Activated CD8-positive, alpha-beta T cell treated with anti-CD3 and anti-CD28 coated beads for 36 hours (primary cell): ENCODE measurements at regions of chr2 and their contacts with region 1.

Region 1: DNA sequence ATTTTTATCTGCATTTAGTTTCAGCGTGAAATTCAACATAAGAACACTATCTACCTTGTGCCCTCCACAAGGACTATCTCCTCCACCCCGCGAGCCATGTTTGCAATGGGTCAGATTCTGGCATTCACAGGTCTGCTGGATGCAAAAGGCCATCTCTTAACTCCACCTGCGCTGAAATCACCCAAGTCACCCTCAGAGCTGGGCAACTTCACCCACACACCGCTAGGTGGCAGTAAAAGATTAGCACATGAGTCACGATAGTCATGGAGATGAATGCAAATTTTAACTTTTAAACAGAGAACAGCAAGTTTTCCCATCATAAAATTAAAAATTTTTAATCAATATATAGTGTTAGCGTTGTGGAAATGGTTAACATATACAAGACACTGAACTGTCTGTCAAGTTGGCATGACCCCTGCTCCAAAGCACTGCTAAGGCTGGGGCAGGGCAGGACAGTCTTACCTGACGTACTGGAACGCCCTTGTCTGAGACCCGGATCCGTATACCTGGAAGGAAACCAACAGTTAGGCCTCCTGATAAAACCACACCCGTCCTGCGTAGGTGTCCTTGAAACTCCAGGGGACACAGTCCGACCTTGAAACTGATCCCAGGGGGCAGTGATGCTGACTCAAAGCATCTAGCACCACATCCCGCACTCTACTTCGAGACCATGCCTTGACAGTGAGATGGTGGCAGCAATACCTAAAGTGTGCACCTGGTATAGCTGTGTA is 89.6 kb downstream of the UXS1 start:
- DNase-seq: peak; percentile 79
- ATAC-seq: peak; percentile 71
- H3K4me3 Mint-ChIP-seq: no peak overlapping the region
- H3K27ac Mint-ChIP-seq: no peak overlapping the region
- H3K4me1 Mint-ChIP-seq: peaks cover 23% of the 10 kb centered on the region
- H3K27me3 Mint-ChIP-seq: no peaks in the 10 kb centered on the region
- CTCF ChIP-seq: peak; percentile 97

Region 2: GRCh38 chr2:106193977-106194778 is 89.7 kb after region 1 on chr2 and contains the start of gene UXS1:
- CTCF ChIA-PET with region 1: interaction called, 7 read pairs
- POLR2A ChIA-PET with region 1: no interaction called
- intact Hi-C with region 1: loop called (anchors 5 kb)
- DNase-seq: peak; percentile 98
- ATAC-seq: peak; percentile 78
- H3K4me3 Mint-ChIP-seq: peak within 1 kb of the TSS; percentile 85
- H3K27ac Mint-ChIP-seq: peak within 1 kb of the TSS; percentile 87
- H3K4me1 Mint-ChIP-seq: peaks cover 41% of the 10 kb centered on the region
- H3K27me3 Mint-ChIP-seq: no peaks in the 10 kb centered on the region
- CTCF ChIP-seq: no peak
- total RNA-seq, gene UXS1: 47.4 to 47.8 TPM

Region 3: GRCh38 chr2:106358081-106358480 is 253.6 kb after region 1 on chr2:
- CTCF ChIA-PET with region 1: no interaction called
- POLR2A ChIA-PET with region 1: no interaction called
- intact Hi-C with region 1: loop called (anchors 10 kb)
- DNase-seq: peak; percentile 3
- ATAC-seq: no peak
- H3K4me3 Mint-ChIP-seq: no peak overlapping the region
- H3K27ac Mint-ChIP-seq: no peak overlapping the region
- H3K4me1 Mint-ChIP-seq: no peaks in the 10 kb centered on the region
- H3K27me3 Mint-ChIP-seq: peaks cover 5% of the 10 kb centered on the region
- CTCF ChIP-seq: no peak